ENCODE measurements at regions of chr12 and their contacts with region 1.

Region 1: DNA sequence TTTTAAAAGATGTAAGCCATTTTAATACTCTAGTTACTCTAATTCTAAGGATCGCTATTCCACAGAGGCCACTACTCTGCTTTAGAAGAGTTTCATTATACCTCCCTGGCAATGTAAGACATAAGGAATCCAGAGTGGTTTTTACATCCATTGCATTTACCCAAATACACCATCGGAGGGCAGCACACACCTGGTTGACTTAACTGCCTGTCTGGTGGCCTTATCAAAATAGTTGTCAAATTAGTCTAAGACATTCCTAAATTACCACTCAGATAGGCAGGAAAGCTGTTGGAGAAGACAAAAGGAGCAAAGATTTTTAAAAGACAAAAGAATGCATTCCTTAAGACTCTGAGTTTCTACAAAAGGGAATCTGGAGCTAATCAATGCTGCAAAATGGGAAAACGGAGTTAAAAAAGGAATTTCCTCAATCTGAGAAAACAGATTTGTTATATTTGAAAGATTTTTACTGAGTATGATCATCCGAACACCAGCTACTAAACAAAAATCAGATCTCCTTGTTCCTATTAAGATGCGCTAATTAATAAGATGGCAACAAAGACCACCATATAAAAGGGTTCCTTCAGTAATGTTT is 33.8 kb upstream of the FGD4 start:
- DNase-seq: peak; percentile 82
- ATAC-seq: peak; percentile 94
- H3K4me3 ChIP-seq: no peak overlapping the region
- H3K27ac ChIP-seq: no peak overlapping the region
- H3K4me1 ChIP-seq: no peaks in the 10 kb centered on the region
- H3K27me3 ChIP-seq: no peaks in the 10 kb centered on the region
- CTCF ChIP-seq: peak; percentile 85
- POLR2A ChIP-seq: no peak
- RAD21 ChIP-seq: peak; percentile 90

Region 2: DNA sequence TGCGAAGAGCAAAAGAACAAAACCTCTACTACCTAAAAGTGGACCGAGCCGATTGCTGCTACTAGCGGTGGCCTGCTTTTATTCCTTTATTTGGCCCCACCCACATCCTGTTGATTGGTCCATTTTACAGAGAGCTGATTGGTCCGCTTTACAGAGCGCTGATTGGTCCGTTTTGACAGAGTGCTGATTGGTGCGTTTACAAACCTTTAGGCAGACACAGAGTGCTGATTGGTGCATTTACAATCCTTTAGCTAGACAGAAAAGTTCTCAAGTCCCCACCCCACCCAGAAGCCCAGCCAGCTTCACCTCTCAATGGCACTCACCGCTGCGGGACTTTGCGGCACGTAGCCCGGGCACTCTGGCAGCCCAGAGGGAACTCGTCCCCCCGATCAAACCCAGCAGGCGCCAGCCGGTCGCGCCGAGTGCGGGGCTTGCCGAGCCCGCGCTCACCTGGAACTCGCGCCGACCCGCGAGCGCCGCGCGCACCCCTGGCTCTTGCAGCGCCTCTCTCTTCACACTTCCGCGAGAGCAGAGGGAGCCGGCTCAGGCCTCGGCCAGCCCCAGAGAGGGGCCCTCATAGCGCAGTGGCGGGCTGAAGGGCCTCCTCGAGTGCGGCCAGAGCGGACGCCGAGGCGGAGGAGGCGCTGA is 25.1 kb after region 1 on chr12:
- CTCF ChIA-PET with region 1: no interaction called
- POLR2A ChIA-PET with region 1: no interaction called
- dilution Hi-C with region 1: no loop called
- in situ Hi-C with region 1: no loop called
- intact Hi-C with region 1: no loop called
- DNase-seq: no peak
- ATAC-seq: 0 out of 2 replicates have a peak, but pooled peaks have one; percentile 35
- H3K4me3 ChIP-seq: peak overlapping the region; percentile 27
- H3K27ac ChIP-seq: no peak overlapping the region
- H3K4me1 ChIP-seq: no peaks in the 10 kb centered on the region
- H3K27me3 ChIP-seq: peaks cover 2% of the 10 kb centered on the region; the same call in 1 of the 2 replicates
- CTCF ChIP-seq: no peak
- POLR2A ChIP-seq: no peak
- RAD21 ChIP-seq: no peak

Region 3: DNA sequence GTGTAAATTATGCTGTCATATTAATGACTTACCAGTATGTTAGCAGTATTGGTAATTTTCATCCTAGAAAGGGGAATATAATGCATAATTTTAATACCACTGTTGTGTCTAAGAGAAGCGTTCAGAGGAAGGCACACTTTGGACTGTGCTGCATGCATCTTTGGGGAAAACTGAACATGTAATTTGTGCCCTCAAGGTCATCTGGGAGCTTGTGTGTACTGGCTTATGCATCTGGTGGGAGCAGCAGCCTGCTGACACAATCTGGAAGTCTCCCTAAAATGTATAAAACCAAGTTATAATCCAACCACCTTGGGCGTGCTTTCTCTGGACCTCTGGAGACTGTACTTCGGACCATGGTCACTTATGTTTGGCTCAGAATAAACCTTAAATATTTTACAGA is 47.8 kb after region 1 on chr12:
- CTCF ChIA-PET with region 1: no interaction called
- POLR2A ChIA-PET with region 1: no interaction called
- dilution Hi-C with region 1: no loop called
- in situ Hi-C with region 1: no loop called
- intact Hi-C with region 1: no loop called
- DNase-seq: no peak
- ATAC-seq: no peak
- H3K4me3 ChIP-seq: no peak overlapping the region
- H3K27ac ChIP-seq: no peak overlapping the region
- H3K4me1 ChIP-seq: no peaks in the 10 kb centered on the region
- H3K27me3 ChIP-seq: peaks cover 4% of the 10 kb centered on the region
- CTCF ChIP-seq: no peak
- POLR2A ChIP-seq: no peak
- RAD21 ChIP-seq: no peak

Region 4: DNA sequence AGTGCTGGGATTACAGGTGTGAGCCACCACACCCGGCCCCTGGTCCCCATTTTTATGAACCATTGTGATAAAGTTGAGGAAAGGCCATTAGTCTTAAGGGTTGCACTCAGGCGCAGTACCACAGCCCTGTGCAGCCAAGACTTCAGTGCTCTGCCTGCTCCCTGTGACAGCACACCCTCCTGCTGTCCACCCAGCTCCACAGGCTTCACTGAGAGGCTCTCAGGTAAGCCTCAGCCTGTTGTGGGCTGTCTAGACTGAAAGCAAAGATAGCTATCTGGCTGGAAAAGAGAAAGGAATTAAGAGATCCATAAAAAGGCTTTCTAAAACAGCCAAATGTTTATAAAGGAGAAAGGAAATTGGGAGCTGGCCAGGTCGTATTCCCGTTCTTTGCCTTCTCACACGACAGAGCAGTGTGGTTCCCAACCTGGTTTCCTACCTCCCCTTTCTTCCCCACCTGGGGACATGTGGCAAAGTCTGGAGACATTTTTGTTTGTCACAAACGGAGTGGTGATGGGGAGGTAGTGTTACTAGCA is 294.4 kb after region 1 on chr12:
- CTCF ChIA-PET with region 1: interaction called, 5 read pairs
- POLR2A ChIA-PET with region 1: no interaction called
- dilution Hi-C with region 1: no loop called
- in situ Hi-C with region 1: no loop called
- intact Hi-C with region 1: loop called (anchors 1 kb)
- DNase-seq: no peak
- ATAC-seq: peak; percentile 47
- H3K4me3 ChIP-seq: no peak overlapping the region
- H3K27ac ChIP-seq: no peak overlapping the region
- H3K4me1 ChIP-seq: 0 out of 2 replicates have a peak, but pooled peaks cover 2% of the 10 kb centered on the region
- H3K27me3 ChIP-seq: no peaks in the 10 kb centered on the region
- CTCF ChIP-seq: no peak
- POLR2A ChIP-seq: no peak
- RAD21 ChIP-seq: no peak

Region 5: DNA sequence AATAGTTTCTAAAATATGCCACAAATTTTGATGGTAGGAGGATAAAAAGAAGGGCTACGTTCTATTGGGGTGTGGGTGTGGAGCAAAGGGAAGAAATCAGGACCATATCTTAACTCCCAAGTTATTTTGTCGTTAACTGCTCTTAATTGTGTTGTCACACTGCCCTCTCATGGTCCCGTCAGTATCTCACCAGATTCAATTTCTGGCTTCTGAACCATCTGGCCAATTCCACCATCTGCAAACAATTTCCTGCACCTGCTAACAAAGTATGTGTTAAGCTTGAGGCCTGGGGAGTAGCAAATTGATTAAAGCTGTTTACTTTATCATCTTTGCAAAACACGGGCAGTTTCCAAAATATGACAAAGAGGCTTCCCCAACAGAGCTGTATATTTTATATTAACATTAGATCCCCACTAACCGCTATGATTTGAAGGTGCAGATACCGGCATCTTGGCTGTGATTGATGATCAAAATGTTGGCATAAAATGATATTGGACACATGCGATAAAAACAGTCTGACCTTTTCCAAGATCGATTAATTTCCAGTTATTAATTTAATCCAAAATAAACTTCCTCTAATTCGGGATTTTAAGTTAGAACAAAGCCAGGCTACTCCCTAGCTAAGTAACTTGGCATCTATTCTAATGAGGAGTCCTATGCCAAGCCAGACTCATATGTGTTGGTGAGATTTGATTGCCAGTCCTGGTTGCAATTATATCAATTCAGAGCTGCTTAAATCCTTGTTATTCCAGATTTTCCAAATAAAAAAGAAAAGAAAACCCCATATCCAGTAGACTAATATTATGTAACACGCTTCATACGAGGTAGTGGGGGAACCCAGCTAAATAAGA is 306.6 kb after region 1 on chr12:
- CTCF ChIA-PET with region 1: interaction called, 5 read pairs
- POLR2A ChIA-PET with region 1: no interaction called
- dilution Hi-C with region 1: no loop called
- in situ Hi-C with region 1: loop called (anchors 5 kb)
- intact Hi-C with region 1: loop called (anchors 1 kb)
- DNase-seq: peak; percentile 83
- ATAC-seq: peak; percentile 92
- H3K4me3 ChIP-seq: no peak overlapping the region
- H3K27ac ChIP-seq: no peak overlapping the region
- H3K4me1 ChIP-seq: no peaks in the 10 kb centered on the region
- H3K27me3 ChIP-seq: no peaks in the 10 kb centered on the region
- CTCF ChIP-seq: peak; percentile 77
- POLR2A ChIP-seq: no peak
- RAD21 ChIP-seq: peak; percentile 83

Region 6: GRCh38 chr12:32727237-32727636 is 361.7 kb after region 1 on chr12:
- CTCF ChIA-PET with region 1: interaction called, 4 read pairs
- POLR2A ChIA-PET with region 1: no interaction called
- dilution Hi-C with region 1: no loop called
- in situ Hi-C with region 1: no loop called
- intact Hi-C with region 1: loop called (anchors 10 kb)
- DNase-seq: no peak
- ATAC-seq: no peak
- H3K4me3 ChIP-seq: no peak overlapping the region
- H3K27ac ChIP-seq: no peak overlapping the region
- H3K4me1 ChIP-seq: no peaks in the 10 kb centered on the region
- H3K27me3 ChIP-seq: no peaks in the 10 kb centered on the region
- CTCF ChIP-seq: no peak
- POLR2A ChIP-seq: no peak
- RAD21 ChIP-seq: no peak

Region 7: GRCh38 chr12:33277386-33277785 is 911.8 kb after region 1 on chr12:
- CTCF ChIA-PET with region 1: no interaction called
- POLR2A ChIA-PET with region 1: no interaction called
- dilution Hi-C with region 1: no loop called
- in situ Hi-C with region 1: no loop called
- intact Hi-C with region 1: no loop called
- DNase-seq: no peak
- ATAC-seq: no peak
- H3K4me3 ChIP-seq: no peak overlapping the region
- H3K27ac ChIP-seq: no peak overlapping the region
- H3K4me1 ChIP-seq: no peaks in the 10 kb centered on the region
- H3K27me3 ChIP-seq: no peaks in the 10 kb centered on the region
- CTCF ChIP-seq: no peak
- POLR2A ChIP-seq: no peak
- RAD21 ChIP-seq: no peak

Region 8: GRCh38 chr12:34022079-34022830 is 1656.7 kb after region 1 on chr12 and contains the start of gene ALG10:
- CTCF ChIA-PET with region 1: no interaction called
- POLR2A ChIA-PET with region 1: no interaction called
- dilution Hi-C with region 1: no loop called
- in situ Hi-C with region 1: loop called (anchors 25 kb)
- intact Hi-C with region 1: no loop called
- DNase-seq: peak; percentile 97
- ATAC-seq: peak; percentile 100
- H3K4me3 ChIP-seq: peak within 1 kb of the TSS; percentile 65
- H3K27ac ChIP-seq: peak within 1 kb of the TSS; percentile 48
- H3K4me1 ChIP-seq: no peaks in the 10 kb centered on the region
- H3K27me3 ChIP-seq: no peaks in the 10 kb centered on the region
- CTCF ChIP-seq: peak; percentile 78
- POLR2A ChIP-seq: peak; percentile 42
- RAD21 ChIP-seq: peak; percentile 79
- total RNA-seq, gene ALG10: 7.2 and 9.7 TPM in 2 replicates

Measured in IMR-90 (cell line).